Activated T-helper 1 cell treated with anti-CD3 and anti-CD28 coated beads, Interleukin-12 subunit alpha, Interleukin-12 subunit beta, Interleukin-2, Interleukin-4 antibody, amounts not matched to agents 30 ng/mL and 10 ng/mL and 1 ng/mL, durations not matched to agents 14 hours and 24 hours and 36 hours (primary cell): ENCODE measurements at regions of chr4 and their contacts with region 1.

Region 1: DNA sequence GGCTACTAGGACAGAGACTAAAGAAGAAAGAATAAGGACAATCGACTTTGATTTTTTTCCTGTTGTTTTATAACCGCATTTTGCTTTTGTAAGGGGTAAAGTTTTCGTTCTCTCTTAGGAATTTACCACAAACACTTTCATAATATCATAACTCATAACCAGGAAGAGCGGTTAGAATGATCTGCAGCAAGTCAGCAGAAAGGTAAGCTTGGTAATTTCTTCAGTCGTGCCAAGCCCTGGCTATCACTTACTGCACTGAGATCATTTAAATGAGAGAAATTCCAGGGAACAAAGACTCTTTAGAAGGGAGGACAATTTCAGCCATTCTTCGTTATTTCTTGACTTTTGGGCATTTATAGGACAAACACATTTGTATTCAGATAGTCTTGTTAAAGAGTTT is 258.1 kb downstream of the UNC5C start:
- DNase-seq: no peak
- H3K4me3 Mint-ChIP-seq: no peak overlapping the region
- H3K27ac Mint-ChIP-seq: no peak overlapping the region
- H3K4me1 Mint-ChIP-seq: peaks cover 17% of the 10 kb centered on the region
- H3K27me3 Mint-ChIP-seq: no peaks in the 10 kb centered on the region

Region 2: GRCh38 chr4:94428884-94429557 is 861.7 kb before region 1 on chr4:
- intact Hi-C with region 1: no loop called
- DNase-seq: no peak
- H3K4me3 Mint-ChIP-seq: no peak overlapping the region
- H3K27ac Mint-ChIP-seq: no peak overlapping the region
- H3K4me1 Mint-ChIP-seq: no peaks in the 10 kb centered on the region
- H3K27me3 Mint-ChIP-seq: peaks cover 5% of the 10 kb centered on the region

Region 3: DNA sequence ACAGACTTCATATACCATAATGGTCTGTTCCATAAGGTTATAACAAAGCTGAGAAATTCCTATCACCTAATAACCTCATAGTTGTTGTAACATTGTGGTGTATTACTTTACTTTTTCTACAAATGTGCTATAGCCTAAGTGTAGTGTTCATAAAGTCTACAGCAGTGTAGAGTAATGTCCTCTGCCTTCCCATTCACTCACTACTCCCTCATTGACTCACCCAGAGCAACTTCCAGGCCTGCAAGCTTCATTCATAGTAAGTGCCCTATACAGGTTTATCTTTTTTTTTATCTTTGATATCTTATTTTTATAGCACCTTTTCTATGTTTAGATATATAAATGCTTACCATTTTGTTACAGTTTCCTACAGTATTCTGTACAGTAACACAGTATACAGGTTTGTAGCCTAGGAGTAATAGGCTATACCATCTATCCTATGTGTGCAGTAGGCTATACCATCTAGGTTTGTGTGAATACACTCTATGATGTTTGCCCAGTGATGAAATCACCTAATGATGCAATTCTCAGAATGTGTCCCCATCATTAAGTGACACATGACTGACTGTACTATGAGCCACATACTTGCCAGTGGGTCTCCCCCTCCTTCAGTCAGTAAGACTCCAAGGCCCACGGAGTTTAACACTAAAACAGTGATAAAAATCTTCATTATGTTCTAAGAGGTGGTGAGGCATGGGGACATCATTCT is 41.8 kb before region 1 on chr4:
- intact Hi-C with region 1: loop called (anchors 2 kb)
- DNase-seq: no peak
- H3K4me3 Mint-ChIP-seq: no peak overlapping the region
- H3K27ac Mint-ChIP-seq: peak overlapping the region; percentile 11
- H3K4me1 Mint-ChIP-seq: no peaks in the 10 kb centered on the region
- H3K27me3 Mint-ChIP-seq: no peaks in the 10 kb centered on the region